ENCODE measurements at regions of chr16 and their contacts with region 1.

Region 1: DNA sequence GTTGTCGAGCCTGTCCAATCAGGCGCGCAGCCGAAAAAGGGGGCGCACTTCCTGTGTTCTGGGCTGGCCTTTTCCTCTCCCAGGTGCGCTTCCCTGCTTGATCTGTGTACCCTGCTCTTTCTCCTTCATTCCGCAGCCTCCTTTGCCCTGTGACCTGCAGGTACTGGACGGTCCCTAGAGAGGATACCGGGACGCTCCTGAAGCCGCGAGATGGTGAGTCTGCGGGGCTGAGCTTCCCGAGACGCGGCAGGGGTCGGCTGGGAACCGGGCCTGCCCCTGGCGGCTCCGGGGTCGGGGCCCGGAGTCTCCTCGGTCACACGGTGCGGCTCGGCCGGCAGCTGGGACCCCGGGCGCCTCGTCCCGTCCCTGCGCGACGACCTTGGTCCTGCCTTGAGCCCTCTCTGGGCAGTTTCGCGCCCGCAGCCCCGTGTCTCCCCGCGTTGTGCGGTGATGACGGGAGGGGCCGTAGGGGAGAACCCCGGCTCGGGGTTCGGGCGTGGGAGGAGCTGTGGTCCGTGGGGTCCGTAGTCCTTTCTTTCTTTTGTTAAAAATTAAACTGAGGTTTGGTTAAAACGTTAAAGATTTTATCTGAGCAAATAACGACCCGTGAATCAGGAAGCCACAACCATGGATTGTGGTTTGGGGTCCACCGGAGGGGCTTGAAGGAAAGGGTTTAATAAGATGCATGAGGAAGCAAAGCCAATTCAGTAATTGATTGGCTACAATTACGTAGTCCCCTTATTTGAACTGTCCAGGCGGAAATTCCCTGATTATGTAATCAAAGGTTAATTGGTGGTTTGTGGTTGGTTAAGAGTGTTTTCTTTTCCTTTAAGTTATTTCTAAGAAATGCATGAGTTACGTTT is 172.8 kb upstream of the ZNF267 start:
- DNase-seq: peak; percentile 88 to 96 (median 90)
- ATAC-seq: peak; percentile 96
- H3K4me3 ChIP-seq: peak overlapping the region; percentile 60 to 89
- H3K27ac ChIP-seq: peak overlapping the region in 3 of 4 donors; percentile 72 to 83 (median 80)
- H3K4me1 ChIP-seq: peaks cover 17% of the 10 kb centered on the region
- H3K27me3 ChIP-seq: no peaks in the 10 kb centered on the region
- CTCF ChIP-seq: peak in 1 of 7 experiments; percentile 15
- POLR2A ChIP-seq: peak; percentile 19 to 75 (median 73)

Region 2: GRCh38 chr16:31421587-31421986 is 279.2 kb before region 1 on chr16:
- intact Hi-C with region 1: no loop called
- DNase-seq: no peak
- ATAC-seq: no peak
- H3K4me3 ChIP-seq: no peak overlapping the region
- H3K27ac ChIP-seq: no peak overlapping the region
- H3K4me1 ChIP-seq: no peaks in the 10 kb centered on the region
- H3K27me3 ChIP-seq: peaks cover 0 to 4% of the 10 kb centered on the region in 2 donors
- CTCF ChIP-seq: no peak
- POLR2A ChIP-seq: no peak

Region 3: DNA sequence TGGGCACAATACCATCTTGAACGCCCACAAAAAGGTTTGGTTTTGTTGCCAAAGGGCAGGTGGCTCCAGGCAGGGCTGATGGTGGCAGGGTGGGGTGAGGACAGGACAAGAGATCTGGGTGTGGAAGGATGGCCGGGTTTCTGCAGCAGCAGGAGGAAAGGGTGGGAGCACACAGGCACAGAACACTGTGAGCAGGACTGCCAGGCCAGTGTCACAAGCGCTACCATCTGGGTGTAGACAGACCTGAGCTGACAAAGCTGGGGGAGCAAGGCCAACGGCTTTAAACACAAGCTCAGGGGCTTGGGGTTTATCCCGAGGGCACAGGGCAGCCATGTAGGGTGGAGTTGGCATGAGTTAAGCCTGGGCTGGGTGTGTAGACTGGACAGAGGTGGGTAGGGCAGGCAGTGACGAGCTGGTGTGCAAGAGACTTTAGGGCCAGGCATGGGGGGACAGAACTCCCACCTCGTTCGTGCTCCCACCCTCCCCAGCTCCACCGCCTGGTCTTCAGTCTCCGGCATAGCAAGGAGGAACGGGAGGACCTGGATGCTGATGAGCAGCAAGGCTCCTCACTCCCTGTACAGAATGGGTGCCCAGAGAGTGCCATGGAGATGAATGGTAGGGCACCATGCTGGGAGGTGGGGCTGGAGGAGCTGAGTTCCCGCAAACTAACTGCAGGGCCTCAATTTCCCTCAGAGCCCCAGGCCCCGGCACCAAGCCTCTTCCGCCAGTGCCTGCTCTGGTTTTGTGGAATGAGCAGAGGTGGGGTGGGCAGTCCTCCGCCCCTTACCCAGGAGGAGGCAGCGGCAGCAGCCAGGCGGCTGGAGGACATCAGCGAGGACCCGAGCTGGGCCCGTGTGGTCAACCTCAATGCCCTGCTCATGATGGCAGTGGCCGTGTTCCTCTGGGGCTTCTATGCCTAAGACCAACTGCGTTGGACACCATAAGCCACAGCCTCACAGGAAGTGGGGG is 210.9 kb before region 1 on chr16:
- intact Hi-C with region 1: loop called (anchors 10 kb)
- DNase-seq: no peak
- ATAC-seq: no peak
- H3K4me3 ChIP-seq: no peak overlapping the region
- H3K27ac ChIP-seq: no peak overlapping the region
- H3K4me1 ChIP-seq: peaks cover 26% of the 10 kb centered on the region
- H3K27me3 ChIP-seq: no peaks in the 10 kb centered on the region
- CTCF ChIP-seq: no peak
- POLR2A ChIP-seq: no peak

Measured in body of pancreas (tissue), 4 donors.